Right ventricle myocardium superior (tissue), 1 donor: ENCODE measurements at regions of chr3 and their contacts with region 1.

Region 1: DNA sequence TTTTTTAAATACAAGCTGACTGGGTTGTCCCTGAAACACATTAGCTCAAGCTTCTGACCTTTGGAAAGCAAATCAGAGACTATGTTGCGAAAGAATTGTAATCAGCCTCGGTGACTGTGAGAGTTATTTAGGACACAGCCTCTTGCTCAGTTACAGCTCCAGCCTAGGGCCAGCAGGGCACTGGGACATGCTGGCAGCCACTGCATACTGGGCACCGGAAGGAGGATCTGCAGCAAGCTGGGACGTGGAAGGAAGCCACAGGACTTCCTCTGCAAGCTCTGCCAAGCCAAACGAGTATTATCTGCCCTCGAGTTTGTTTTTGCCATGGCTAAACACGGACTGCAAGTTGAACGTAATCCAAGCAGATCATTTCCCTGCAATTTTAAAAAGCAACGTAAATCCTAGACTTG is 24.4 kb upstream of the COPG1 start:
- DNase-seq: peak; percentile 91
- ATAC-seq: peak; percentile 95

Region 2: DNA sequence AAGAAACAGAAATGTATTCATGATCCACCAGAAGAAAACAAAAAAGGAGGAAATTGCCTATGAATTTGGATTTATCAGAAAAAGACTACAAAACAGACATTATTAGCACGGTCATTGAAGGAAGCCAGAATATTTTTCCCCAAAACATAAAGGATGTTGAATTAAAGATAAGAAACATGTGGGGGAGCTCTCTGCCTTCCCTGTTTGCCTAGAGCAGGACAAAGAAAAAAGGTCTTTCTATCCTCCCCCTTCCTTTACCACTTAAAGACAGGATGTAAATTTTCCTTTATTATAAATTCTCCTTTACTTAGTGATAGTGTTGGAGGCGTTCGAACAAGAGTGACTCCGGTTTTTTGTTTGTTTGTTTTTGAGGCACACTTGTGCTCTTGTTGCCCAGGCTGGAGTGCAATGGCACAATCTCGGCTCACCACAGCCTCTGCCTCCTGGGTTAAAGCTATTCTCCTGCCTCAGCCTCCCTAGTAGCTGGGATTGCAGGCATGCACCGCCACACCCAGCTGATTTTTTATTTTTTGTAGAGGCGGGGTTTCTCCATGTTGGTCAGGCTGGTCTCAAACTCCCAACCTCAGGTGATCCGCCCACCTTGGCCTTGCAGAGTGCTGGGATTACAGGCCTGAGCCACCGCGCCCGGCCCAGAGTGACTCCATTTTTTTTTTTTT is 559.5 kb before region 1 on chr3:
- intact Hi-C with region 1: no loop called
- DNase-seq: no peak
- ATAC-seq: no peak

Region 3: DNA sequence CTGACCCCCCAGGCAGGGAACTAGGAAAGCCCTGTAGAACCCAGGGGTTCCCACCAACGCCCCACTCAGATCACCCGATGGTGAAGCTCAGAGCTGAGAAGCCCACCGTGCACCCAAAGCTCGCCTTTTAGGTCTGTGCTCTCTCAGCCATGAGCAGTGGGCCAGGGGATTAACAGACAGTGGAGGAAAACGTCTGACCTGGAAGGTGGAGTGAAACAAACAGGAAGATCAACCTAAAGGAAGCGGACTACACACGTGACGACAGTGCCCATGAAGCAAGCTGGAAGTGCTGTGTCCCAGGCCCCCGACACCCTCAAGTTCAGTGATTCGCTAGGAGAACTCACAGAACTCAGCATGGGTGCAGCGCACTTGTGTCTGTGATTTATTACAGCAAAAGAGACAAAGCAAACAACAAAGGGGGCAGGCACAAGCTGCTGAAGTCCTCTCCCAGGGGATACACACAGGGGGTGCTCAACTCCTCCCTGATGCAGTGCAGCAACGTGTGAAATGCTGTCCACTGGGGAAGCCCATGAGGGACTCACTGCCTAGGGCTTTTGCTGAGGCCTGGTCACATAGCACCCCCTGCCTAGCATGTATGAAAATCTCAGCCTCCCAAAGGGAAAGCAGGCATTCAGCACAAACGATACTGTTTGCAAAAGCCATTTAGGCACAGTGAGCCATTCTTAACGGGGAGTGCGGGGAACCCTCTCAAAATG is 274.6 kb before region 1 on chr3:
- intact Hi-C with region 1: no loop called
- DNase-seq: no peak
- ATAC-seq: peak; percentile 69

Region 4: DNA sequence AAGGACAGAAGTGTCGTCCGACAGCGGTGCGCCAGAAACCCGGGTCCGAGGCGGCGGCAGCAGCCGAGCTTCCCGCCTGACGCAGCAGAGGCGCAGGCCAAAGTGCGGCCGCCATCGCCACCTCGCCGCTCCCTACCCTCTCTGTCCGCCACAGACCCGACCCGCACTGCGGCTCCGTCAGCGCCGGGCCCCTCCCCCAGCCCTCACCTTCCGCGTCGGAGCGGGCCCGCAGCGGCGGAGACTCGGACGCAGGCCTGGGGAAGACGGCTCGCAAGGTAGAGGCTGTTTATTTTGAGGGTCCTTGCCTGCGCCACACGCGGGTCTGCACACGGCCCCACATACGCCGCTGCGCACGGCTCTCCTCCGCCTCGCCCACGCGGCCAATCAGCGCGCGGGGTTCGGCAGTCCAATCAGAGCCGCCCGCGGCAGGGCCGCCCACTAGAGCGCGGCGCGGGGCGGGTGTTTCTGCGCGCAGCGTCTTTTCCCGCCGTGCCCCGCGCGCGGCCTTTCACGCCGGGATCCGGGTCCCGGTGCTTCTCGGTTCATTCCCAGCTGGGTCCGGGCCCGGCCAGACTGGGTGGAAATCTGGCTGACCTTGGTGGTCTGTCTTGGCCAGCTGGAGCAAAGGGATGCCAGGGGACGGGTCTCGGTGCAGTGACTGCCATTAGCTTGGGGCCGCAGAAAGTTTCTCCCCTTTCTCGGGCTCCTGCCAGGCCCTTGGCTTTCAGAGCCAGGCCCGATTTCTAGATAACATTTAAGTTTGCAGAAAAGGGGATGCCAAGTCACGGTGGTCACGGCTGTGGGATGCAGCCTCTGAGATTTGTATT is 41.2 kb before region 1 on chr3 and contains the start of gene CNBP:
- intact Hi-C with region 1: loop called (anchors 5 kb)
- DNase-seq: peak; percentile 97
- ATAC-seq: peak; percentile 98
- total RNA-seq, gene CNBP: 476 TPM

Region 5: DNA sequence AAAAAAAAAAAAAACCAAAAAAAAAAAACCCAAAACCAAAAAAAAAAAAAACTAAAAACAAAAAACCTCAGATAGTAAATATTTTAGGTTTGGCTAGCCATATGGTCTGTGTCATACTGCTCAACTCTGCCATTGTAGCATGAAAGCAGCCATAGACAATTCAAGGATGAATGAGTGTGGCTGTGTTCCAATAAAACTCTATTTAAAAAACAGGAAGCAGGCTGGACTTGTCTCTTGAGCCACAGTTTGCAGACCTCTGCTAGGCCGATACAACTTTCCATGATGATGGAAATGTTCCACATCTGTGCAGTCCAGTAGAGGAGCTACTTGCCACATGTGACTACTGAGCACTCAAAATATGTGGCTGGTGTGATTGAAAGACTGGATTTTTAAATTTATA is 192.3 kb after region 1 on chr3:
- intact Hi-C with region 1: no loop called
- DNase-seq: no peak
- ATAC-seq: peak; percentile 59